HCT116 (cell line): ENCODE measurements at regions of chr14 and their contacts with region 1.

Region 1: GRCh38 chr14:56153267-56153666 is 35.1 kb downstream of the PELI2 start:
- DNase-seq: no peak
- ATAC-seq: no peak
- H3K4me3 ChIP-seq: no peak overlapping the region
- H3K27ac ChIP-seq: no peak overlapping the region
- H3K4me1 ChIP-seq: no peaks in the 10 kb centered on the region
- H3K27me3 ChIP-seq: peaks cover 34% of the 10 kb centered on the region
- CTCF ChIP-seq: no peak
- POLR2A ChIP-seq: no peak
- RAD21 ChIP-seq: no peak

Region 2: GRCh38 chr14:56117765-56118610 is 35.3 kb before region 1 on chr14 and contains the start of gene PELI2:
- CTCF ChIA-PET with region 1: no interaction called
- POLR2A ChIA-PET with region 1: no interaction called
- RAD21 ChIA-PET with region 1: no interaction called
- intact Hi-C with region 1: loop called (anchors 2 kb)
- DNase-seq: peak; percentile 15
- ATAC-seq: peak; percentile 86
- H3K4me3 ChIP-seq: peak within 1 kb of the TSS; percentile 56 to 63
- H3K27ac ChIP-seq: peak within 1 kb of the TSS; percentile 27; the same call in 1 of the 2 replicates
- H3K4me1 ChIP-seq: peaks cover 0 to 12% of the 10 kb centered on the region in 2 experiments; a peak in 2 of 4 replicates
- H3K27me3 ChIP-seq: peaks cover 76% of the 10 kb centered on the region
- CTCF ChIP-seq: no peak
- POLR2A ChIP-seq: no peak
- RAD21 ChIP-seq: no peak
- total RNA-seq, gene PELI2: 2.0 TPM